Activated B cell treated with CpG ODN at 0.5 μM for 24 hours (primary cell): ENCODE measurements at regions of chr9 and their contacts with region 1.

Region 1: DNA sequence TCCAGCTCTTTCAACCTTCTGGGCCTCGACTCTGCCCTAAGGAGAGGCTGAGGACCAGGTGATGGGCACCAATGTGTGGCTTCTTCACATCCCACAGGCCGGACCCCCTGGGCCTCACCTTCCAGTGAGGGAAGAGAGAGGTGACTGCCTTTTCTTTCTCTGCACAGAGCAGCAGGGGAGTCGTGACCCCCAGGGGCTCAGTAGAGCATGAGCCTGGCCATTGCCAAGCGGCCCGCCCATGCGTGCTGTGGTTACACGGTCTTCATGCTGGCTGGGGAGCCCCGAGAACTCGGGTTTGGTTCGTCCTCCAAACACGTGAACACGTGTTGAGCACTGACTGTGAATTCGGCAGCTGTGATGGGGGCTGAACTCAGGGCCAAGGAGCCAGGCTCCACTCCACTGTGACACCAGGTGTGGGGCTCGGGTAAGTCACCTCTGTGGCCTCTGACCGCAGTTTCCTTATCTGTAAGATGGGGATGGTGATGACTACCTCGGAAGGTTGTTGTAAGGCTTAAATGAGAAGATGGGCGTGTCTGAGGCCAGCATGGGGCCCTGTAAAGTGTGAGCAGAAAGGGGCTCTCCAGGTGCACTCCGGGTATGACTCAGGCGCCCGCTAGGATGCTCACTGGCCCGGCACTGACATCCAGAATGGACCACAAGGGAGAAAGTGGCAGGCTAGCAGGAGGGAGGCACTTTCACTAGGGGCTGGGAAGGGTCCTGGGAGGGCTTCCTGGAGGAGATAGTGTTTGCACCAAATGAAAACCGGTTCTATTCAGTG is 13.4 kb upstream of the GRHPR start:
- DNase-seq: peak; percentile 85
- ATAC-seq: peak; percentile 80
- H3K4me3 Mint-ChIP-seq: peak overlapping the region; percentile 75
- H3K27ac Mint-ChIP-seq: peak overlapping the region; percentile 98
- H3K4me1 Mint-ChIP-seq: peaks cover 92% of the 10 kb centered on the region
- H3K27me3 Mint-ChIP-seq: no peaks in the 10 kb centered on the region
- CTCF ChIP-seq: no peak

Region 2: GRCh38 chr9:36928670-36929349 is 480.3 kb before region 1 on chr9:
- CTCF ChIA-PET with region 1: no interaction called
- POLR2A ChIA-PET with region 1: no interaction called
- intact Hi-C with region 1: loop called (anchors 2 kb)
- DNase-seq: no peak
- ATAC-seq: peak; percentile 77
- H3K4me3 Mint-ChIP-seq: peak overlapping the region; percentile 70
- H3K27ac Mint-ChIP-seq: peak overlapping the region; percentile 91
- H3K4me1 Mint-ChIP-seq: peaks cover 86% of the 10 kb centered on the region
- H3K27me3 Mint-ChIP-seq: no peaks in the 10 kb centered on the region
- CTCF ChIP-seq: no peak

Region 3: GRCh38 chr9:37027582-37028419 is 381.3 kb before region 1 on chr9:
- CTCF ChIA-PET with region 1: interaction called, 3 read pairs
- POLR2A ChIA-PET with region 1: interaction called, 14 read pairs
- intact Hi-C with region 1: loop called (anchors 2 kb)
- DNase-seq: peak; percentile 95
- ATAC-seq: peak; percentile 85
- H3K4me3 Mint-ChIP-seq: peak overlapping the region; percentile 90
- H3K27ac Mint-ChIP-seq: peak overlapping the region; percentile 96
- H3K4me1 Mint-ChIP-seq: peaks cover 77% of the 10 kb centered on the region
- H3K27me3 Mint-ChIP-seq: no peaks in the 10 kb centered on the region
- CTCF ChIP-seq: no peak

Region 4: GRCh38 chr9:37293664-37294524 is 115.2 kb before region 1 on chr9:
- CTCF ChIA-PET with region 1: interaction called, 3 read pairs
- POLR2A ChIA-PET with region 1: interaction called, 8 read pairs
- intact Hi-C with region 1: loop called (anchors 1 kb)
- DNase-seq: no peak
- ATAC-seq: peak; percentile 69
- H3K4me3 Mint-ChIP-seq: peak overlapping the region; percentile 67
- H3K27ac Mint-ChIP-seq: peak overlapping the region; percentile 97
- H3K4me1 Mint-ChIP-seq: peaks cover 95% of the 10 kb centered on the region
- H3K27me3 Mint-ChIP-seq: no peaks in the 10 kb centered on the region
- CTCF ChIP-seq: no peak

Region 5: DNA sequence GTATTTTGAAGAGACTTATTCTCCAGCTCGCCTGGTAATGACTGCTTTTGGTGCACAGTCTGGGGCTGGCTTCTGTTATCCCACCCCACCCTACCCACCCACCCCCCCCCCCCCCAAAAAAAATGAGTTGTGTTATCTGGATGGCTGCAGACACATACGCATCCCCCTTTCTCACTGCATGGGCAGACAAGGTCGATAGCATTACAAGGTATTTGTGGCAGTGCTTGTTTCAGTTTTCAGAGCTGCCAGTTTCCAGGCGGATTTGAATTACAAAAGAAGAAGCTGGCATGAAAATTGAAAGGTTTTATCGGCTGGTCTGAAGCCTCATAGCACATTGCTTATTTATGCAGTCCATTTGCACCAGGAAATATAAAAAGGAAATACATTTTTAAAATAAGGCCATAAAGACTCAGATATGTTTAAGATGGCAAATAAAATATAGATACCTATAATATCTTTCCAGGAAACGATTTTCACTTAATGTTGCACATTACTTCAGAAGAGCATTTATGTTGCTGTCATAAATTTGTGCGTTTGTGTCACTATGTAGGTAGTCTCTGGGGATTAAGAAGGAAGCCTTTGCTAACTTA is 71.7 kb before region 1 on chr9:
- CTCF ChIA-PET with region 1: interaction called, 9 read pairs
- POLR2A ChIA-PET with region 1: interaction called, 24 read pairs
- intact Hi-C with region 1: loop called (anchors 2 kb)
- DNase-seq: no peak
- ATAC-seq: peak; percentile 50
- H3K4me3 Mint-ChIP-seq: peak overlapping the region; percentile 71
- H3K27ac Mint-ChIP-seq: peak overlapping the region; percentile 94
- H3K4me1 Mint-ChIP-seq: peaks cover 73% of the 10 kb centered on the region
- H3K27me3 Mint-ChIP-seq: no peaks in the 10 kb centered on the region
- CTCF ChIP-seq: no peak

Region 6: DNA sequence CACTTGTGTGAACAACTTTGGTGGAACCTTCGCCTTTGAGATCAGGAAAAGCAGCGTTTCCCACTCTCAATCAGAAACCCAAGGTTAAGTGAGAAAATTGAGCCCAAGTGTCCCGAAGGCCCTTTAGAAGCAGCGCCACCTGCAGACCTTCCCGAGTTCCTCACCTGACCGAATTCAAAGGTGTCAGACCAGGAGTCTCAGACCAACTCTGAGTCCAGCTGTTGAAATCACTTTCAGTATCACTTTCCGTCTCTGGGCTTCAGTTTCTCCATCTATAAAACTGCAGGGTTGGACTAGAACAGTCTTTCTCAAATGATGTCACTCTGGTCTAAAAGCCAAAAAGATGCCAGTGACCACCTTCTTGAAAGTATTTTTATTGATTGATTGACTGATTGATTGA is 18.4 kb before region 1 on chr9:
- CTCF ChIA-PET with region 1: interaction called, 15 read pairs
- POLR2A ChIA-PET with region 1: interaction called, 677 read pairs
- intact Hi-C with region 1: loop called (anchors 1 kb)
- DNase-seq: no peak
- ATAC-seq: peak; percentile 54
- H3K4me3 Mint-ChIP-seq: peak overlapping the region; percentile 4
- H3K27ac Mint-ChIP-seq: peak overlapping the region; percentile 86
- H3K4me1 Mint-ChIP-seq: peaks cover 66% of the 10 kb centered on the region
- H3K27me3 Mint-ChIP-seq: no peaks in the 10 kb centered on the region
- CTCF ChIP-seq: no peak